ENCODE measurements at regions of chr9 and their contacts with region 1.

Region 1: GRCh38 chr9:36102742-36103495 is 33.6 kb upstream of the GLIPR2 start:
- DNase-seq: peak; percentile 49 to 85
- H3K4me3 ChIP-seq: no peak overlapping the region
- H3K27ac ChIP-seq: no peak overlapping the region
- H3K4me1 ChIP-seq: peaks cover 0 to 3% (median 2%) of the 10 kb centered on the region in 4 experiments; a peak in 4 of 7 replicates
- H3K27me3 ChIP-seq: no peaks in the 10 kb centered on the region
- CTCF ChIP-seq: peak; percentile 71 to 89 (median 80)
- EP300 ChIP-seq: no peak
- POLR2A ChIP-seq: no peak
- RAD21 ChIP-seq: peak; percentile 78 to 83

Region 2: GRCh38 chr9:36023260-36024048 is 79.5 kb before region 1 on chr9:
- CTCF ChIA-PET with region 1: interaction called, 14 read pairs
- POLR2A ChIA-PET with region 1: no interaction called
- DNase-seq: peak in 1 of 2 experiments; percentile 83
- H3K4me3 ChIP-seq: no peak overlapping the region
- H3K27ac ChIP-seq: no peak overlapping the region
- H3K4me1 ChIP-seq: no peaks in the 10 kb centered on the region
- H3K27me3 ChIP-seq: no peaks in the 10 kb centered on the region
- CTCF ChIP-seq: peak; percentile 74 to 95 (median 95)
- EP300 ChIP-seq: no peak
- POLR2A ChIP-seq: no peak
- RAD21 ChIP-seq: peak; percentile 84 to 90

Region 3: GRCh38 chr9:36080519-36080918 is 22.4 kb before region 1 on chr9:
- CTCF ChIA-PET with region 1: no interaction called
- POLR2A ChIA-PET with region 1: no interaction called
- DNase-seq: no peak
- H3K4me3 ChIP-seq: no peak overlapping the region
- H3K27ac ChIP-seq: no peak overlapping the region
- H3K4me1 ChIP-seq: no peaks in the 10 kb centered on the region
- H3K27me3 ChIP-seq: no peaks in the 10 kb centered on the region
- CTCF ChIP-seq: no peak
- EP300 ChIP-seq: no peak
- POLR2A ChIP-seq: no peak
- RAD21 ChIP-seq: no peak

Region 4: DNA sequence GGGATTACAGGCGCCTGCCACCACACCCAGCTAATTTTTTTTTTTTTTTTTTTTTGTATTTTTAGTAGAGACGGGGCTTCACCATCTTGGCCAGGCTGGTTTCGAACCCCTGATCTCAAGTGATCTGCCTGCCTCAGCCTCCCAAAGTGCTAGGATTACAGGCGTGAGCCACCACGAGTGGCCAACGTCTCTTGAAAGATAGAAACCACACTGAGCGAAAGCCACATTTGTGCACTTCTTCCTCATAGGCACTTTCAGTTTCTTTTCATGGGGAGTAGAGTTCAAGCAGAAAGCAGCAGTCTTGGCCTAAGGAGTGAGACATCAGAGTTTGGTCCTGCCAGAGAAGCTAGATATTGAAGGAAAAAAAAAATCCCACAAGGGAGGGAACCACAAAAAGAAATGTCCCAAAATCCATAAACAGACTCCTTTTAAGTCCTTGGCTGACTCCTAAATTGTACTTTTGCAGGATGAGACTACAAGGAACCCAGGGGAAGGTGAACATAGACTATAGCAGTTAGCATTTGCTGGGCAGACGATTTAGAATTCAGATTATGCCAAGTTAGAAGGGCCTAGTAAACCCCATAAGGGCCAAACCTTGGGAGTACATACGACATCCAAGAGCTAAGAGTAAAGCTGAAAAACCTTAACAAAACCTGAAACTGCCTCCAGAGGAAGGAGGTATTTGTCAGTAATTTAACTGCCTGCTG is 10.3 kb before region 1 on chr9:
- CTCF ChIA-PET with region 1: interaction called, 21 read pairs
- POLR2A ChIA-PET with region 1: interaction called, 6 read pairs
- DNase-seq: no peak
- H3K4me3 ChIP-seq: no peak overlapping the region
- H3K27ac ChIP-seq: peak overlapping the region; percentile 41
- H3K4me1 ChIP-seq: peaks cover 0 to 6% (median 4%) of the 10 kb centered on the region in 4 experiments; a peak in 4 of 7 replicates
- H3K27me3 ChIP-seq: no peaks in the 10 kb centered on the region
- CTCF ChIP-seq: no peak
- EP300 ChIP-seq: no peak
- POLR2A ChIP-seq: no peak
- RAD21 ChIP-seq: no peak

Region 5: DNA sequence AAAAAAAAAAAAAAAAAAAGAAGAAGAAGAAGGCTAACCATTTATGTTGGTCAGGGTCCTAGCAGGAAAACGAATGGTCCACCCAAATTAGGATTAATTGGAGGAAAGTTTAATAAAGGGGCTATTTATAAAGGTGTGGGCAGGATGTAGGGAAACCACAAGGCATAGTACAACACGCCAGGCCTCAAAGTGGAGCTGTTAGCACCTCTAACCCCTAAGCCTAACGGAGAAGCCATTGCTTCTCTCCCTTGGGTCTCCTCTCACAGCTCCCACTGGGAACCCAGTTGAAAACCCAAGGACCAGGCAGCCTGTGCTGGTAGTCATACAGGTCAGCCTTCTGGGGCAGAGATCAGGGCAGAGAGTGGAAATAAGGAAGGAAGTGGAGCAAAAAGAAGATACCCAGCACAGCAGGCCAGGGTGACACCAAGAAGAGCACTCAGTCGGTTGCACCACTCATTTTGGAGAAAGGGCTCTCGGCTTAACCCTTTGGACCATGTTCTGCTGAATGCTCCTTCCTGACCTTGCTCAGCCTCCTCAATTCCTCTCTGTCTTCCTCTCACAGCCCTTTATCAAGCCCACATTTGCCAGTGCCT is 24.8 kb after region 1 on chr9:
- CTCF ChIA-PET with region 1: interaction called, 23 read pairs
- POLR2A ChIA-PET with region 1: no interaction called
- DNase-seq: no peak
- H3K4me3 ChIP-seq: no peak overlapping the region
- H3K27ac ChIP-seq: no peak overlapping the region
- H3K4me1 ChIP-seq: no peaks in the 10 kb centered on the region
- H3K27me3 ChIP-seq: no peaks in the 10 kb centered on the region; a peak in 3 of 7 replicates
- CTCF ChIP-seq: no peak
- EP300 ChIP-seq: no peak
- POLR2A ChIP-seq: no peak
- RAD21 ChIP-seq: no peak

Region 6: GRCh38 chr9:36166101-36166927 is 63.4 kb after region 1 on chr9:
- CTCF ChIA-PET with region 1: interaction called, 153 read pairs
- POLR2A ChIA-PET with region 1: interaction called, 5 read pairs
- DNase-seq: peak; percentile 25 to 96
- H3K4me3 ChIP-seq: peak overlapping the region; percentile 29 to 62 (median 39)
- H3K27ac ChIP-seq: no peak overlapping the region
- H3K4me1 ChIP-seq: peaks cover 11 to 25% (median 17%) of the 10 kb centered on the region in 4 experiments
- H3K27me3 ChIP-seq: no peaks in the 10 kb centered on the region
- CTCF ChIP-seq: peak; percentile 68 to 91 (median 84)
- EP300 ChIP-seq: no peak; a peak in 1 of 3 replicates
- POLR2A ChIP-seq: no peak
- RAD21 ChIP-seq: peak; percentile 85